ENCODE measurements at regions of chr2 and their contacts with region 1.

Region 1: GRCh38 chr2:33599175-33599942 is at the start of gene FAM98A:
- DNase-seq: peak; percentile 98
- H3K4me3 Mint-ChIP-seq: peak within 1 kb of the TSS; percentile 90
- H3K27ac Mint-ChIP-seq: peak within 1 kb of the TSS; percentile 94
- H3K4me1 Mint-ChIP-seq: peaks cover 35% of the 10 kb centered on the region
- H3K27me3 Mint-ChIP-seq: no peaks in the 10 kb centered on the region
- total RNA-seq, gene FAM98A: 58.1 and 59.8 TPM in 2 replicates

Region 2: GRCh38 chr2:32356735-32357644 is 1242.4 kb before region 1 on chr2 and contains the start of gene BIRC6:
- intact Hi-C with region 1: loop called (anchors 10 kb)
- DNase-seq: peak; percentile 92
- H3K4me3 Mint-ChIP-seq: peak within 1 kb of the TSS; percentile 89
- H3K27ac Mint-ChIP-seq: peak within 1 kb of the TSS; percentile 96
- H3K4me1 Mint-ChIP-seq: peaks cover 40% of the 10 kb centered on the region
- H3K27me3 Mint-ChIP-seq: no peaks in the 10 kb centered on the region
- total RNA-seq, gene BIRC6: 112 and 123 TPM in 2 replicates

Region 3: DNA sequence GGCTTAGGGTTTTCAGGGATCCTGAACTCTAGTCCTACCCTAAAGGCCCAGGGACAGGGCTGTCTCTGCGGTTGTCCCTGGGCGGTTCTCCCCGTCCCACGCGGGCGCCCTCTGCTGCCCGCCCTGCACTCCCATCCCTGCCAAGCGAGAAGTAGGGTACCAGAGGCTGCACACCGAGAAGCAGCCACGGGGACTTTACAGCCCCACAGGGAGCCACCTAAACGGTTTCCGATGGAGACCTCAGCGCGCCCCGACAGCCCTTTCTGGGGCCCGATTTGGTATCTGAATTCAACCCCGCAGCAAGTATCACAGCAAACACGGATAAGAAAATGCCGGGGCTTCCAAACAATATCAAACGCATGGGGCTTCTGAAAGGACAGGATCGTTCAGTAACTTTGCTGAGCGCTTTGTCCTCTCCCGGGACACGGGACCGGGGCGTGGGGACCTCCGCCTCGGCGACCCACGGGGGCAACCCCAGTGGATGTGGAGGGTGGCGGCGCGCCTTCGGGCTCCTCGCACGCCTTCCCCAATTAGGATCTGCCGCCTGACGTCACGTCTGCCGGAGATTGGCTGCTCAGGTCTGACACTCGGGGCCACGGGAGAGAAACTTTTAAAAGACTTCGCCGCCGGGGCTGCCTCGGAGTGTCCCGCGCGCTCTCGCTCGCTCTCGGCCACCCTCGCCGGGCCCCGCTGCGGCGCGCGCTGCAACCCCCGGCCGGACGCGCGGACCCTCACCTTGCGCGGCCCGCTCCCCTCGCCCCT is 652.9 kb before region 1 on chr2 and contains the start of gene LTBP1:
- intact Hi-C with region 1: loop called (anchors 2 kb)
- DNase-seq: peak; percentile 68
- H3K4me3 Mint-ChIP-seq: peak within 1 kb of the TSS; percentile 84
- H3K27ac Mint-ChIP-seq: no peak within 1 kb of the TSS
- H3K4me1 Mint-ChIP-seq: peaks cover under 1% of the 10 kb centered on the region
- H3K27me3 Mint-ChIP-seq: peaks cover 30% of the 10 kb centered on the region
- total RNA-seq, gene LTBP1: 0.12 and 0.26 TPM in 2 replicates

Region 4: DNA sequence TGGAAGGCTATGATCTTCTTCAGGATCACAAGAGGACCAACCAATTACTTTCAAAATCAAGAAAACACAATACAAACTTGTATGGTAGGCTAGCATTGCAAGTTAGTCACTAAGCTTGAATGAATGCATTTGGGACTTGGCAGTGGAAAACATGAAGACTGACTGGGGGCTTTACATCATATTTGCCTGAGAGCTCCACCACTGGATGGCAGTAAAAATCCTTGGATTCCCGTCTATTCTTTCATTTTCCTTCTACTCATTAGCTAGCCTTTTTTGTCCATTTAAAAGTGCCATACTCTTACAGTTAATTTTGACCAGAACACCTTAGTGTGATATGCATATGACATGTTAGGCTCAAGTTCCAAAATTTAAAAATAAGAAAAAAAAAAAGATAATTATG is 186.4 kb before region 1 on chr2:
- intact Hi-C with region 1: no loop called
- DNase-seq: no peak
- H3K4me3 Mint-ChIP-seq: no peak overlapping the region
- H3K27ac Mint-ChIP-seq: no peak overlapping the region
- H3K4me1 Mint-ChIP-seq: no peaks in the 10 kb centered on the region
- H3K27me3 Mint-ChIP-seq: peaks cover 12% of the 10 kb centered on the region

Region 5: DNA sequence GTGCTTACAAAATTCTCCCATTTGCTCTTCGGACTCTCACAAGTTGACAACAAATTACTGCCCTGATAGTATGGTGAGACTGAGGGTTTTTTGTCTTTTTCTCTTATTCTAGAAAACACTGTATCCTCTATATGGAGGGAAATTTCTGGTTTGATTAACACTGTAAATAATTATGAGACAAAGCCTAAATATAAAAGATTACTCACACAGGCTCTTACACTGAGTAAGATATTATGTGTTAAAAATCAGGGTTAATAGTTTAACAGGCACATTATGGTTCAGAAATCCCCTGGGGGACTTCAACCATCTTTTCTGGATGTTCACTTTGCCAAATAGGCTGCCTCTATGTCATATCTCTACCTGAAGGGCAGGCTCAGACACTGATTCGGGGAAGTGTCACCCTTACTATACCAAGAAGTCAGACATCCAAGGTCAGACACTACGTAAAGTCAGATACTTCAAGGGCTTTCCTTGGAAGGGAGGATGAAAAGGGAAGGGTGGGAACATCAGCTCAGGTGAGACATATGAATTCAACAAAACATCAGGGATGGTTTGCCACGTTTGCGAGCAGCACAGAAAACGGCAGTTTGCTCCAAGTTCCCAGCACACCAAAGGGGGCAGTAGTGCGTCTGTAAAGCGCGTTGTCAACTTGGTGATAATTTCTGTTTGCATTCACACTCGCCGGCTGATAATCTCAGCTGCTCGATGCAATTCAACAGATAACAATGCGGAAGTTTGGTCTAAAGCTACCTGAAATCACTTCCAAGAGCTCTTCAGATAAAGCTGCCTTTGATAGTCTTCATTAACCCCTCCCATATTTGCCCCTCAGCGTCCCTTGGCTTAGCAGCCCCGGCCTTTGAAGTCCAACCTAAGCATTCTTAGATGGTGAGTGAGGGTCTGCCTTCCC is 123.9 kb before region 1 on chr2:
- intact Hi-C with region 1: loop called (anchors 1 kb)
- DNase-seq: peak; percentile 75
- H3K4me3 Mint-ChIP-seq: peak overlapping the region; percentile 92
- H3K27ac Mint-ChIP-seq: peak overlapping the region; percentile 99
- H3K4me1 Mint-ChIP-seq: peaks cover 41% of the 10 kb centered on the region
- H3K27me3 Mint-ChIP-seq: peaks cover 7% of the 10 kb centered on the region

Measured in activated T-helper 1 cell treated with anti-CD3 and anti-CD28 coated beads, Interleukin-12 subunit alpha, Interleukin-12 subunit beta, Interleukin-2, Interleukin-4 antibody, amounts not matched to agents 30 ng/mL and 10 ng/mL and 1 ng/mL, durations not matched to agents 14 hours and 24 hours and 36 hours (primary cell).